Activated T-helper 2 cell treated with anti-CD3 and anti-CD28 coated beads, Interferon-gamma antibody, Interleukin-2, Interleukin-4, amounts not matched to agents 10 μg/mL and 5 μg/mL and 100 μg/mL, durations not matched to agents 14 hours and 24 hours and 36 hours (primary cell): ENCODE measurements at regions of chr5 and their contacts with region 1.

Region 1: DNA sequence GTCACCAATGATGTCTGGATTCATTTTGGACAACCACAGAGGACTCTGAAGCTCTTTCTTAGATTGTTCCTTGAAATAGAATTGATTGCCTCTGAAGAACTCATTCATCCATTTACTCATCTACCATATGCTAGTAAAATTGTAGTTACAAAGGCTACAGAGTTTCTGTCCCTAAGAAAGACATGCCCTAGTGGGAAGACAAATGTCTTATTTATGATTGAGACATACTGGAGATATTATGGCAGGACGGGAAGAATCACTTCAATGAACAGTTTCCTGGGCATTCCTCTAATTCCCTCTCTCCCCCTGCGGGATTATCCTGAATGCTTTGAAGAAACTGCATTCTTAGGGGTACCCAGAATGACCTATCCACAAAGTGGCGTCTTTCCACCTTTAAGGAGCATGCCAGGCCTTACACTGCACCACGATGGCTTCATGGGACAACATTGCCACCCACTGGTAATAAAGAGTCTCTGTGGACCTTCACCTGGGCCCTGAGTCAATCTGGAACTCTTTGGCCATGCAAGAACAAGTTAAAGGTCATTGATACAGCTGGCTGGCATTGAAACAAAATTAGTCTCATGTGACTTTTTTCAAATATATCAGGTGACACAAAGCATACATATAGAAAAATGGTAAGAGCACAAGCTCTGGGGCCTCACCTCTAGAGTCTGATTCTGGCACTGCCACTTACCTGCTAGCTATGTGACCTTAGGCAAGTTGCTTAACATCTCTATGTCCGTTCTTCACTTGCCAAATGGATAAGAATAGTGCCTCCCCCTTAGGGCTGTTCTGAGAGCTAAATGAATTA is 32.1 kb downstream of the ANKRD55 start:
- DNase-seq: peak; percentile 46
- H3K4me3 Mint-ChIP-seq: no peak overlapping the region
- H3K27ac Mint-ChIP-seq: no peak overlapping the region
- H3K4me1 Mint-ChIP-seq: peaks cover 21% of the 10 kb centered on the region
- H3K27me3 Mint-ChIP-seq: no peaks in the 10 kb centered on the region

Region 2: GRCh38 chr5:55172051-55172899 is 1028.8 kb before region 1 on chr5:
- intact Hi-C with region 1: loop called (anchors 5 kb)
- DNase-seq: peak; percentile 60
- H3K4me3 Mint-ChIP-seq: peak overlapping the region; percentile 86
- H3K27ac Mint-ChIP-seq: peak overlapping the region; percentile 36
- H3K4me1 Mint-ChIP-seq: peaks cover 34% of the 10 kb centered on the region
- H3K27me3 Mint-ChIP-seq: peaks cover 66% of the 10 kb centered on the region

Region 3: DNA sequence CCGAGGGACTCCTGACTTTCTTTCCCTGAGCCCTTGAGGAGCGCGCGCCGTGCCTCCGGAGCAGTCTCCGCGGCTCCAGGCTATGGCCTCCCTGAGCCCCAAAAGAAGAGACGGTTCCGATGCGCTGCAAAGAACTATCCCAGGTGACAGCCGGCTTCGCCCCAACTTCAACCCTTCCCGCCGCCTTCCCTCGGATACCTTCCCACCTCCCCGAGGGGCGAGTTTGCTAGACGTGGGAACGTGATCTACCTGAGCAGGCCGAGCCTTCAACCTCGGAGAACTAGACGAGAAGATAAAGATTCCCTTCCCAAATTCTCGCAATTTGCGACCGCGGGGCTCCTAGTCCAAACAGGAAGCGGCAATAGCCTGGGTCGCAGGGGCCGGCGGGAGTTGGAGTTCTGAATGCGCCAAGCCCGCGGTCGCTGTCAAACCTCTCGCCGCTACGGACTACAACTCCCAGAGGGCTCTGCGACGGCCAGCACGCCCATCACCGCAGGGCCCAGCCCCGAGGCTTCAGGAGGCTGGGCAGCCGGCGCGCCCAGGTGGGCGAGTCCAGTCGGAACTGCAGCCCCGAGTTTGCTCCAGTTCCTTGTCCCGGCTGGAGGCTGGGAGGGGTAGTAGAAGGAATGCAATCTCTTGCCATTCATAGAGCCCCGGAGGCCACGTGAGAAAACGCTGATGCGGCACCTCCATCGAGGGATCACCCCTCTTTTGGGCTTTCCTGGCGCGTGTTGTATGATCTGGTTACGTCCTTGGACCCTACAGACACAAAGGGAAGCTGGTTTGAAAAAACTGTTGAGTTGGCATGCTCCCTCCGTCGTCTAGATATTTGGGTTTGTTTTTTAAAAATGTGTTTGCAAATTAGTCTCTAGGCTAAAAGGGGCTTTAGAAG is 488.8 kb before region 1 on chr5 and contains the start of gene SLC38A9:
- intact Hi-C with region 1: loop called (anchors 10 kb)
- DNase-seq: peak; percentile 88
- H3K4me3 Mint-ChIP-seq: peak within 1 kb of the TSS; percentile 98
- H3K27ac Mint-ChIP-seq: peak within 1 kb of the TSS; percentile 90
- H3K4me1 Mint-ChIP-seq: peaks cover 30% of the 10 kb centered on the region
- H3K27me3 Mint-ChIP-seq: peaks cover 4% of the 10 kb centered on the region
- total RNA-seq, gene SLC38A9: 19.3 and 22.2 TPM in 2 replicates

Region 4: GRCh38 chr5:55936100-55936693 is 264.9 kb before region 1 on chr5:
- intact Hi-C with region 1: loop called (anchors 1 kb)
- DNase-seq: peak; percentile 67
- H3K4me3 Mint-ChIP-seq: no peak overlapping the region
- H3K27ac Mint-ChIP-seq: no peak overlapping the region
- H3K4me1 Mint-ChIP-seq: peaks cover 6% of the 10 kb centered on the region
- H3K27me3 Mint-ChIP-seq: no peaks in the 10 kb centered on the region

Region 5: DNA sequence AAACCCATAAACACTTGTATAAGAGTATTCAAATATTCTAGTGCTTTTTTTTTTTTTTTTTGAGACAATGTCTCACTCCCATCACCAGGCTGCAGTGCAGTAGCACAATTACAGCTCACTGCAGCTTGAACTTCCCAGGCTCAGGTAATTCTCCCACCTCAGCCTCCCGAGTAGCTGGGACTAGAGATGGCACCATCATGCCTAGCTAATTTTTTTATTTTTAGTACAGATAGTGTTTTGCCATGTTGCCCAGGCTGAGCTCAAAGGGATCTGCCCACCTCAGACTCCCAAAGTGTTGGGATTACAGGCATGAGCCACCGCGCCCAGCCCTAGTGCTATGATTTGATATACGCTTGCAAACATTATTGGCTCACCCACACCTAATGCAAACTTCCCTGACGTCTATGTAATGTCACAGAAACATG is 218.1 kb before region 1 on chr5:
- intact Hi-C with region 1: loop called (anchors 2 kb)
- DNase-seq: no peak
- H3K4me3 Mint-ChIP-seq: peak overlapping the region; percentile 5
- H3K27ac Mint-ChIP-seq: no peak overlapping the region
- H3K4me1 Mint-ChIP-seq: peaks cover 67% of the 10 kb centered on the region
- H3K27me3 Mint-ChIP-seq: no peaks in the 10 kb centered on the region